Activated CD4-positive, alpha-beta T cell treated with anti-CD3 and anti-CD28 coated beads for 36 hours (primary cell): ENCODE measurements at regions of chr5 and their contacts with region 1.

Region 1: GRCh38 chr5:5492087-5492933 is 69.8 kb downstream of the ICE1 start:
- DNase-seq: peak; percentile 52
- ATAC-seq: peak; percentile 63
- H3K4me3 Mint-ChIP-seq: no peak overlapping the region
- H3K27ac Mint-ChIP-seq: no peak overlapping the region
- H3K4me1 Mint-ChIP-seq: peaks cover 13% of the 10 kb centered on the region
- H3K27me3 Mint-ChIP-seq: peaks cover 5% of the 10 kb centered on the region

Region 2: DNA sequence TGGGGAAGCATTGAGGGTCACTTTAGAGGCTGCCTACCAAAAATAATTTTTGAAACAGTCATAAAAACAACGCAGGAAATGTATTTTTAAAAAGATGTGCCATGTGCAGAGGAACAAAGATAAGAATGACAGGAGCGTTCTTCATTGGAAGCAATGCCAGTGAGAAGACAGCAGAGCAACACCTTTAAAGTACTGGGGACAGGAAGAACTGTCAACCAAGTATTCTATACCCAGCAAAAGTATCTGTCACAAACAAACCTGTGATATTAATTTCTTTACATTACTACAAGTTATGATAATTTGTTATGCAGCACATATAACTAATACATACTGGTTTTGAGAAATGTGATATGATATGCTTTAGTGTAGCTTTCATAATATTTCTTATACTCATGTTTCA is 1221.1 kb before region 1 on chr5:
- CTCF ChIA-PET with region 1: no interaction called
- POLR2A ChIA-PET with region 1: no interaction called
- intact Hi-C with region 1: no loop called
- DNase-seq: no peak
- ATAC-seq: no peak
- H3K4me3 Mint-ChIP-seq: no peak overlapping the region
- H3K27ac Mint-ChIP-seq: no peak overlapping the region
- H3K4me1 Mint-ChIP-seq: no peaks in the 10 kb centered on the region
- H3K27me3 Mint-ChIP-seq: no peaks in the 10 kb centered on the region

Region 3: DNA sequence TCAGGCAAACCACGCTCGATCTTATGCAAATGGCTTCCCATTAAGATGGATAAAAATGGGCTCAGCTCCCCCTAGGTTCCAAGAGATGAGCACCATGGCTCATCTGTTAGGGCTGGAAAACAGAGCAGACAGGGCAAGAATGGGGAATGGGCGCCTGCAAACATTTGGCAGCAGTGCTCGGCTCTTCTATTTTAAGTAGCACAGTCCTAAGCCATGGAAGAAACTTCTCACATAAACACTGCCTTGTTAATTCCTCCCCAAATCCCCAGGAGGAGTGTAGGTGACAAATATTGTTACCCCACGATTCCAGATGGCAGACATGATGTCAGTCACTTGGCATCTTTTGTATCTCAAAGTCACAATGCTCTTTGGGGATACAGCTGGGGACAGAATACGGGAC is 151.9 kb after region 1 on chr5:
- CTCF ChIA-PET with region 1: no interaction called
- POLR2A ChIA-PET with region 1: no interaction called
- intact Hi-C with region 1: loop called in 1 of 2 experiments (anchors 5 kb)
- DNase-seq: no peak
- ATAC-seq: no peak
- H3K4me3 Mint-ChIP-seq: no peak overlapping the region
- H3K27ac Mint-ChIP-seq: no peak overlapping the region
- H3K4me1 Mint-ChIP-seq: no peaks in the 10 kb centered on the region
- H3K27me3 Mint-ChIP-seq: peaks cover 9% of the 10 kb centered on the region

Region 4: DNA sequence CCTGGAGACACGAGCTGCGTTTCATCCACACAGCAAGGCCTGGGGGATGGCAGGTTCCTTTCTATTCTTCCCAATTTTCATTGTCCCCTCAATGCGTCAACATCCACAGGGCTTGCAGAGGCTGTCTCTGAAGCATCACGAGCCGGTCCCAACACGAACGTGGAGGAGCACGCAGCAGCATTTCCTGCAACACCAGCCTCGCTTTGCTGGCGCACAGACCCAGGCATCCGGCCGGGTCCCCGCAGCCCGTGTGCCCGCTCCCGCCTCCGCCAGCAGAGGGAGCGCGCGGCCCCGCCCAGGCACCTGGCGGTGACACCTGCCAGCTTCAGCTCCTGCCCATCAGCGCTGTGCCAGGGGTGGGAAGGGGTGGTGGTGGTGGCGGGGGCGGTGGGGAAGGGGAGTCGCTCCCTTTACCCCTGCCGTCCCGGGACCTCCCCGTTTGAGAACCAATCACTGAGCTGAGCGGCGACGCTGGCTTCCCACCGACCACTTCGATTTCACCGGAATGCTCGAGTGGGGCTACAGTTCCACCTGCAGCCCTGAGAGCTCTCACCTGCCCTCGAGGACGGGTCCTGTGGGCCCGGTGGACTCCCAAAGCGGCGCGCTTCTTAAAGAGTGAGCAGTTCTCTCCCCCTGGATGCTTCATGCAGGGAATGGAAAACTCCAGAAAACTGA is 394.6 kb after region 1 on chr5:
- CTCF ChIA-PET with region 1: no interaction called
- POLR2A ChIA-PET with region 1: no interaction called
- intact Hi-C with region 1: loop called in 1 of 2 experiments (anchors 1 kb)
- DNase-seq: peak; percentile 71
- ATAC-seq: peak; percentile 80
- H3K4me3 Mint-ChIP-seq: no peak overlapping the region
- H3K27ac Mint-ChIP-seq: no peak overlapping the region
- H3K4me1 Mint-ChIP-seq: no peaks in the 10 kb centered on the region
- H3K27me3 Mint-ChIP-seq: peaks cover 14% of the 10 kb centered on the region

Region 5: DNA sequence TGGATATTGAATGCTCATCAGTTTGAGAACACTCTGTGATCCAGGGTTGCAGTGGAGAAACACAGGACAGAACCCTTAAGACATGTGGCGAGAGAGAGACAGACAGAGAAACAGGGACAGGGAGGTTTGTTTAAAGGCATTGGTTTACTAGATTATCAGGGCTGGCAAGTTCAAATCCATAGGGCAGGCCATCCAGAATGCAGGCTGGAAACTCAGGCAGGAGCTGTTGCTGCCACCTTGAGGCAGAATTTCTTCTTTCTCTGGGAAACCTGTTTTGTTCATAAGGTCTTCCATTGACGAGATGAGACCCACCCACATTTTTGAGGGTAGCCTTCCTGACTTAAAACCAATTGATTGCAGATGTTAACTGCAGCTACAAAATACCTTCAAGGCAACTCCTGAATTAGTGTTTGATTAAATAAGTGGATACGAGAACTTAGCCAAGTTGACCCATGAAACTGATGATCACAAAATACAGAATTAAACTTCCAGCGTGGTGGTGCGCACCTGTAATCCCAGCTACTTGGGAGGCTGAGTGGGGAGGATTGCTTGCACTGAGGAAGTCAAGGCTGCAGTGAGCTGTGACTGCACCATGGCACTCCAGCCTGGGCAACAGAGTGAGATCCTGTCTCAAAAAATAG is 1084.7 kb after region 1 on chr5:
- CTCF ChIA-PET with region 1: no interaction called
- POLR2A ChIA-PET with region 1: no interaction called
- intact Hi-C with region 1: loop called (anchors 5 to 10 kb)
- DNase-seq: peak; percentile 39
- ATAC-seq: no peak
- H3K4me3 Mint-ChIP-seq: no peak overlapping the region
- H3K27ac Mint-ChIP-seq: no peak overlapping the region
- H3K4me1 Mint-ChIP-seq: no peaks in the 10 kb centered on the region
- H3K27me3 Mint-ChIP-seq: peaks cover 24% of the 10 kb centered on the region

Region 6: DNA sequence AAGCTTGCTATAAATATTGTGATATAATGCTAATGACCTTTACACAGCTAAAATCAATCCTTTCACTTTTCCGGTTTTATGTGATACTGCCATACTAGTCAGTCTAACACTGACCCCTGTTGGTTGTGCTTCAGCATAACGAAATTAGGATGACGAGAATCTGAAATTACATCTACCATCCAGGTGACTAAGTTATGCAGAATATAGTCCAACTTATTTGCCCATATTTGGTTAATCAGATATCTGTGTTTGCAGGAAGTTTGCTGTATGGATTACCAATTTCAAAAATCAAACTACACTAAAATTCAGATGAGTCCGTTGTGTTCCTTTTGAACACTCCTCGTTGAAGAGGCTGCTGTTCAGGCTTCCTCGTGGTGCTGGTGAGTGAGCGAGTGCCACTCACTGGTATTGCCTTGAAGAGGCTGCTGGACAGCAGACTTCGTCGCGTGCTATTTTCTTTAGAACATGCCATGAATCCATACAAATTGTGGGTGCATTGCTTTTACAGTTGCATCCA is 1253.5 kb after region 1 on chr5:
- CTCF ChIA-PET with region 1: no interaction called
- POLR2A ChIA-PET with region 1: no interaction called
- intact Hi-C with region 1: loop called in 1 of 2 experiments (anchors 5 kb)
- DNase-seq: no peak
- ATAC-seq: peak; percentile 87
- H3K4me3 Mint-ChIP-seq: no peak overlapping the region
- H3K27ac Mint-ChIP-seq: no peak overlapping the region
- H3K4me1 Mint-ChIP-seq: peaks cover 5% of the 10 kb centered on the region
- H3K27me3 Mint-ChIP-seq: no peaks in the 10 kb centered on the region